Activated CD4-positive, alpha-beta memory T cell treated with anti-CD3 and anti-CD28 coated beads for 36 hours (primary cell): ENCODE measurements at regions of chr11 and their contacts with region 1.

Region 1: DNA sequence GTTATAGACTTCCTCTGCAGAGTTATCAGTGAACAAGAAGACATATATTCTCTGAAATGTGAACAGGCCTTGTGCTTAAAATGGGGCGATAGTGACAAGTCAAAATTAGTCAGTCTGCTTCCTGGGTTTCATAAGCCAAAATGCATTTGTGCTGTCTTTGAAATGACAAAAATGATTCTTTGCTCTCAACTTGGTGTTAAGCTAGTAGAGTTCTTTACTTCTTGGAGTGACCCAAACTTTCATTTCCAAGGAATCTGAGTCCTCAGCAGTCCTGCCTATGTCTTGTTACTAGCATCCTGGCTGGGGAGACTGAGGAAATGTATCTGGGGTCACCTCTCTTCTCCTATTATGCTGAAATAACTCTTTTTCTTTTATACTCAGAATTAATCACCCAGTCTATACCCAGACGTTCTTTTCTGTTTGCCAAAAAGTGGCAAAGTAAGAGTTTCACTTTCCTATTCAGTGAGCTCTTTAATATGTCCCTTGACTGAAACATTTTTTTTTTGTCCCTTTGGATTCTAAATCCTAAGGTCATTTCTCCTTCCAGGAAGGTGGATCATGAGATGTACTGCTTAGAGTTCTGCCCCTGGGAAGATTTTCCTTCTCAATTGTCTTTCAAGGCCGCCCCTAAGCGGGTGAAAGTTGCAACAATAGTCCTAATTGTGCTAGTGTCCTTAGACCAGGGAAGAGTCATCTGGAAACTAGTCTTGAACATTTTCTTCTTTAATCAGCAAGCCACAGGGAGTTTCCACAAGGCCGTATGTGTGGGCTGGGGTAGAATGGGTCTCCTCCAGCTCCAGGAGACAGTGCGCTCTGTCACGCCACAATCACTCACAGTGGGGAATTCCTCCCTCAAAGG is 53.0 kb upstream of the RDX start:
- DNase-seq: peak; percentile 90
- H3K4me3 Mint-ChIP-seq: peak overlapping the region; percentile 5
- H3K27ac Mint-ChIP-seq: peak overlapping the region; percentile 94
- H3K4me1 Mint-ChIP-seq: peaks cover 60% of the 10 kb centered on the region
- H3K27me3 Mint-ChIP-seq: no peaks in the 10 kb centered on the region

Region 2: GRCh38 chr11:110032957-110033570 is 316.3 kb before region 1 on chr11:
- CTCF ChIA-PET with region 1: no interaction called
- POLR2A ChIA-PET with region 1: no interaction called
- intact Hi-C with region 1: no loop called
- DNase-seq: no peak
- H3K4me3 Mint-ChIP-seq: no peak overlapping the region
- H3K27ac Mint-ChIP-seq: no peak overlapping the region
- H3K4me1 Mint-ChIP-seq: no peaks in the 10 kb centered on the region
- H3K27me3 Mint-ChIP-seq: peaks cover 2% of the 10 kb centered on the region

Region 3: DNA sequence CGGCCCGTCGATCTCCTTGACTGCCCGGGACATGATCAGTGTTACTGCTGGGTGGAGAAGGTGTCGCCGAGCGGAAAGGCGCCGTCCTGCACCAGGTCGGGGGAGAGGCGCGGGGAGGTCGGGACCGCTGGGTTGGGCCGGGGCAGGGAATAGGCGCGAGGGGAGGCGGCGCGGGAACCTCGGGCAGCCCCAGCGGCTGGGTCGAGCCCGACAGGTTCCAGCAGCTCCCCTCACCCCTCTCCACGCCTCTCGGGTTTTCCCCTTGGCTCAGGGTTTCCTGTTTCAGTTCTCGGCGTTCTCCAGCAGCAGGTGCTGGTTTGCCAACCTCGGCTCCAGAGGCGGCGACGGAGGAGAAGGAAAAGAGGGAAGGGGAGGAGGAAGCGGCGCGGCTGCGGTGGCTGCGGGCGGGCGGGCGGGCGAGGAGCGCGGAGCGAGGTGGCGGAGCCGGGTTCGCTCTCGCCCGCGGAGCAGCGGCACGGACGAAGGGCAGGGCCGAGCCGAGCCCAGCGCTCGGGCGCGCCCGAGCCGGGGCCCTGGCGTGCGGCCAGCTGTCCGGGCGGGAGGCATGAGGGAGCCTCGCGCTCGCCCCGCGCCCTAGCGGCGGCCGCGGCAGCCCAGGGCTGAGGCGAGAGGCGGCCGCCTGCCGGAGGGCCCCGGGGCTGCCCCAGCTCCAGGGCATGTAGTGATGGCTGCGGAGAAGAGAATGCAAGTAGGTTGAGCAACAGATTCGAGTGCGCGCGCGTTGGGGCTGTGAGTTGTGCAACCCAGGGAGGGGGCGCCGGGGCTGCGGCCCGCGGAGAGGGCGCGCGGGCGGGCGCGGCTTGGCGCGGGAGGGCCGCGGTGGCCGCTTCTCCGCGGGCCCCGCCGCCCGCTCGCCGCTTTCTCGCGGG is 256.6 kb before region 1 on chr11 and contains the start of gene ZC3H12C:
- CTCF ChIA-PET with region 1: no interaction called
- POLR2A ChIA-PET with region 1: no interaction called
- intact Hi-C with region 1: loop called (anchors 5 kb)
- DNase-seq: peak; percentile 63
- H3K4me3 Mint-ChIP-seq: peak within 1 kb of the TSS; percentile 74
- H3K27ac Mint-ChIP-seq: no peak within 1 kb of the TSS
- H3K4me1 Mint-ChIP-seq: peaks cover 9% of the 10 kb centered on the region
- H3K27me3 Mint-ChIP-seq: peaks cover 43% of the 10 kb centered on the region
- total RNA-seq, gene ZC3H12C: 0.46 to 0.69 TPM

Region 4: GRCh38 chr11:110311783-110312579 is 37.4 kb before region 1 on chr11:
- CTCF ChIA-PET with region 1: interaction called, 4 read pairs
- POLR2A ChIA-PET with region 1: no interaction called
- intact Hi-C with region 1: loop called (anchors 1 kb)
- DNase-seq: peak; percentile 41
- H3K4me3 Mint-ChIP-seq: no peak overlapping the region
- H3K27ac Mint-ChIP-seq: peak overlapping the region; percentile 69
- H3K4me1 Mint-ChIP-seq: peaks cover 15% of the 10 kb centered on the region
- H3K27me3 Mint-ChIP-seq: no peaks in the 10 kb centered on the region

Region 5: GRCh38 chr11:110337570-110338193 is 11.7 kb before region 1 on chr11:
- CTCF ChIA-PET with region 1: interaction called, 4 read pairs
- POLR2A ChIA-PET with region 1: interaction called, 5 read pairs
- intact Hi-C with region 1: loop called (anchors 1 kb)
- DNase-seq: peak; percentile 79
- H3K4me3 Mint-ChIP-seq: no peak overlapping the region
- H3K27ac Mint-ChIP-seq: peak overlapping the region; percentile 45
- H3K4me1 Mint-ChIP-seq: peaks cover 23% of the 10 kb centered on the region
- H3K27me3 Mint-ChIP-seq: no peaks in the 10 kb centered on the region

Region 6: GRCh38 chr11:110453684-110454354 is 104.5 kb after region 1 on chr11:
- CTCF ChIA-PET with region 1: no interaction called
- POLR2A ChIA-PET with region 1: no interaction called
- intact Hi-C with region 1: loop called (anchors 1 kb)
- DNase-seq: no peak
- H3K4me3 Mint-ChIP-seq: no peak overlapping the region
- H3K27ac Mint-ChIP-seq: no peak overlapping the region
- H3K4me1 Mint-ChIP-seq: peaks cover 34% of the 10 kb centered on the region
- H3K27me3 Mint-ChIP-seq: no peaks in the 10 kb centered on the region

Region 7: DNA sequence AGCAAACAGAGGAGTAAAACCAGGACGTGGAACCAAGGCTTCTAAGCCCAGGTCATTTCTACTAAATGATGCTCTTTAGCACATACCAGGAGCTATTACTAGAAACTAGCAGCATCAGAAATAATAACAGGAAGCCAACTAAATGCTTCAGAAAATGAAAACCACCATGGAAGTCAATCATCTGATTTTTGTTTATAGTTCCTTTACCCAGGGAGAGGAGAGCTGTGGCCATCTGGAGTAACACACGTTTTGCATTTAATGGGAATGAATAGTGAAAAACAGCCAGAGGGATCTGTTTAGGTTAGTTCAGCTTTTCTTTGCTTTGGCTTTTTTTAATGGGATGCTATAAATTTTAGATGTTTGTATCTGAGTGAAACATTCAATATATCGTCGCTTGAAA is 613.6 kb after region 1 on chr11:
- CTCF ChIA-PET with region 1: no interaction called
- POLR2A ChIA-PET with region 1: no interaction called
- intact Hi-C with region 1: no loop called
- DNase-seq: no peak
- H3K4me3 Mint-ChIP-seq: no peak overlapping the region
- H3K27ac Mint-ChIP-seq: no peak overlapping the region
- H3K4me1 Mint-ChIP-seq: no peaks in the 10 kb centered on the region
- H3K27me3 Mint-ChIP-seq: peaks cover 3% of the 10 kb centered on the region

Region 8: DNA sequence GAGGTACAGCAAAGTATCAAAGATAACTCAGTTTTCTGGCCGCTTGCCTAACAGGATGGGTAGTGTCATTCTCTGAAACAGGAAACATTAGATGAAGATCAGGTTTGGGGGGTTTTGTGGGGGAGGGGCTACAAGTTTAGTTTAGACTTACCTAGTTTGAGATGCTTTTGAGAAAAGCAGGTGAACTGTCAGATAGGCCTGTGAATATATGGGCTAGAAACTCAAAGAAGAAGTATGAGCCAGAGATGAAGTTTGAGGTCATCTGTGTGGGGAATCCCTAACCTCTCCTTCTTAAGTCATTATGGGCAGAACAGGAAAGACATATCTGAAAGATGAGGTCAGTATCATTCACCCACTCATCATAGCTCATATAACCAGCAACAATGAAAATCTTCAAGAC is 1177.1 kb after region 1 on chr11:
- CTCF ChIA-PET with region 1: no interaction called
- POLR2A ChIA-PET with region 1: no interaction called
- intact Hi-C with region 1: loop called (anchors 2 kb)
- DNase-seq: peak; percentile 43
- H3K4me3 Mint-ChIP-seq: no peak overlapping the region
- H3K27ac Mint-ChIP-seq: no peak overlapping the region
- H3K4me1 Mint-ChIP-seq: peaks cover 28% of the 10 kb centered on the region
- H3K27me3 Mint-ChIP-seq: peaks cover 15% of the 10 kb centered on the region